Transverse colon (tissue), 4 donors: ENCODE measurements at regions of chr7 and their contacts with region 1.

Region 1: DNA sequence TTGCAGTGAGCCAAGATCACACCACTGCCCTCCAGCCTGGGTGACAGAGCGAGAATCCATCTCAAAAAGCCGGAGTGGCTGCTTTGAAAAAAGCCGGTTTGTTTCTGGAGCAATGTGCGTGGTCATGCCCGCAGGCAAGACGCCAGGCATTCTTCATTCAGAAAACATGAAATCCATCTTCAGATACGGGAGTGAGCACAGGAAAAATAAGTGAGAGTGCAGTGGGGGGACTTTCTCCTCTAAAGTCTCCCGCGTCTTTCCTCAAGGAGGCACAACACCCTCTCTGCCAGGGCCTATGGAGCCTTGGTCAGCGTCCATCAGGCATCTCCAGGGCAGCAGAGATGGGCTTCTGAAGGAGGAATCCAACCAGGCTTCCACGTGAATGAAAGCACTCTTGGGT is 62.3 kb upstream of the DGKI start:
- DNase-seq: no peak
- H3K4me3 ChIP-seq: no peak overlapping the region
- H3K27ac ChIP-seq: peak overlapping the region in 3 of 4 donors; percentile 2 to 66 (median 36)
- H3K4me1 ChIP-seq: peaks cover 0 to under 1% (median 0%) of the 10 kb centered on the region in 4 donors
- H3K27me3 ChIP-seq: no peaks in the 10 kb centered on the region
- CTCF ChIP-seq: no peak
- EP300 ChIP-seq: no peak
- POLR2A ChIP-seq: no peak

Region 2: DNA sequence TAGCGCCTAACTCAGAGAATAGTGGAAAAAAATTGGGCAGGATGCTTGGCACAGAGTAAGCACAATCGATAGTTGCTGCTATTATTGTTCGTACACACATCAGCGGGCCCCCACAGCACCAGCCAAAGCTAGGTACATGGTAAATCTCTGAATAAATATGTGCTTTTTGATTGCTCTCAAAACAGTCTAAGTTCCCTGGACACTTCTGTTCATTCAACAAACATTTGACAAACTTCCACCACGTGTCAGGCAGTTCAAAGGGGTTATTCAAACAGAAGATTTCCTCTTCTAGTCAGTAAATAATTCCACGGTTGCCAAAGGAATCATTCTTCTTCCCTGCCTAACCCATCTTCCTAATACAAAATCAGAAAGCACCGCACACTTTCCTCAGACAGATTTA is 213.1 kb before region 1 on chr7:
- in situ Hi-C with region 1: no loop called
- intact Hi-C with region 1: no loop called
- DNase-seq: no peak
- H3K4me3 ChIP-seq: no peak overlapping the region
- H3K27ac ChIP-seq: no peak overlapping the region
- H3K4me1 ChIP-seq: no peaks in the 10 kb centered on the region
- H3K27me3 ChIP-seq: no peaks in the 10 kb centered on the region
- CTCF ChIP-seq: no peak
- EP300 ChIP-seq: no peak
- POLR2A ChIP-seq: no peak

Region 3: DNA sequence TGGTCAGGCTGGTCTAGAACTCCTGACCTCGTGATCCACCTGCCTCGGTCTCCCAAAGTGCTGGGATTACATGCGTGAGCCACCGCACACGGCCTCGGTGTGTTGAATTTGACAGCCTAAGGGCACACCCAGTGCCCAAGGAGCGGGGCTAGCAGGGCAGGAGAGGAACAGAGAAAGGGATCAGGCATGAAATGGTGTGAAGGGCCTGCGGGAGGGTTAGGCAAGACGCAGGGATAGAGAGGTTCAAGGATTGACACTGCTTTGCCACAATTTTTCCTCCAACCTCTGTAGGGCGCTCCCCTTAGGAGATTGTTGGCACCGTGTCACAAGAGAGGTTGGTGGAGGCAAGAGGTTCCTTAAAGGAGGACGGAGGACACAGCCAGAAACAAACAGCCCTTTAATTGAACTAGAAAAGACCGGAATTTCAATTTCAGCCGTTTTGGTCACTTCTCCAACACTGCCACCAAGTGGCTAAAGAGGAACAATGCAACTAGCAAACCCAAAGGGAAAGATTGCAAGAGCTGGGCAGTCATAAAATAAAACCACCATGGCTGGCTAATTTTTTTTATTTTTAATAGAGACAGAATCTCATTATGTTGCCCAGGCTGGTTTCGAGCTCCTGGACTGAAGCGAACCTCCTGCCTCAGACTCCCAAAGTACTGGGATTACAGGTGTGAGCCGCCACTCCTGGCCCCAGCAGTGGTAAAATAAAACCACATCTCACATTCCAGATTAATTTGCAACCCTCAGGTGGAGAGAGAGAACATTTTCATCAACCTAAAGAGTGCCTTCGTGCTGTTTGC is 99.7 kb after region 1 on chr7:
- in situ Hi-C with region 1: loop called (anchors 5 to 10 kb)
- intact Hi-C with region 1: no loop called
- DNase-seq: peak; percentile 24
- H3K4me3 ChIP-seq: no peak overlapping the region
- H3K27ac ChIP-seq: no peak overlapping the region
- H3K4me1 ChIP-seq: peaks cover 0 to 6% (median 2%) of the 10 kb centered on the region in 4 donors
- H3K27me3 ChIP-seq: no peaks in the 10 kb centered on the region
- CTCF ChIP-seq: peak; percentile 87 to 93 (median 91)
- EP300 ChIP-seq: no peak
- POLR2A ChIP-seq: no peak

Region 4: DNA sequence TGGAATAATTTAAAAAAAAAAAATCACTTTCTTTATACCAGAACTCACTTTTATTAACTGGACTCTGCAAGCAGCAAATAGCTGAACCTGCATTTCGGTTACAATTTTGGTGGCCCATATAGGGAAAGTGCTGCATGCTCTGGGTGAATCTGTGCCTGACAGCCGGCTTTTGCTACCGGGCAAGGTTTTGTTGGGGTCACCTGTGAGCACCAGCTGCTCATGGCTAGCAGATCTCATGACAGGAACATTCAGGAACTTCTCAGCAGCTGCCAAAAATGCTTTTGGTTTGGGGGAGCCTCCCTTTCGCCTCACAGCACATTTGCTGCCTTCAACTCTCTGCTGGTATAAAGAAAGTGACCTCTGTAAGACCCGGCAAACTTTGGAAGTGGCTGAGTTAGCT is 106.1 kb after region 1 on chr7:
- in situ Hi-C with region 1: loop called in 1 of 4 experiments (anchors 5 kb)
- intact Hi-C with region 1: no loop called
- DNase-seq: peak; percentile 20
- H3K4me3 ChIP-seq: no peak overlapping the region
- H3K27ac ChIP-seq: no peak overlapping the region
- H3K4me1 ChIP-seq: no peaks in the 10 kb centered on the region
- H3K27me3 ChIP-seq: no peaks in the 10 kb centered on the region
- CTCF ChIP-seq: no peak
- EP300 ChIP-seq: no peak
- POLR2A ChIP-seq: no peak